HepG2 (cell line): ENCODE measurements at regions of chr5 and their contacts with region 1.

Region 1: DNA sequence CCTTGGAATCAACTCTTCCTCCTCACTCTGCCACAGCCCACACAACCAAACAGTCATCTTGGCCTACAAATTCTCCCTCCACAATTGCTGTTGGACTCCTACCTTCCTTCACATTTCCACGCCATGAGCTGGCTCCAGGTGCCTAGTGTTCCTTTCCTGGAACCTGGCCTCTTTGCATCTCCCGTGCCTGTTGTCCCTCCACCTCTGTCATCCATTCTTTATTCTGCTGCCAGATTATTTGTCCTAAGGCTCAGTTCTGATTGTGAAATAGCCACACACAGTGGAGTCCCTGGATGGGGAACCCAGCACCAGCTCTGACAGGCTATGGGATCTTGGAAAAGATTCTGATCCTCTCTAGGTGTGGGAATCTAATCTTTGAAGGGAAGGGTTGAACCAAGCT is 109.1 kb upstream of the ANKH start:
- DNase-seq: peak; percentile 32
- ATAC-seq: peak; percentile 75
- H3K4me3 ChIP-seq: no peak overlapping the region
- H3K27ac ChIP-seq: no peak overlapping the region
- H3K4me1 ChIP-seq: peaks cover 46% of the 10 kb centered on the region
- H3K27me3 ChIP-seq: no peaks in the 10 kb centered on the region
- CTCF ChIP-seq: no peak
- EP300 ChIP-seq: no peak
- POLR2A ChIP-seq: no peak
- RAD21 ChIP-seq: no peak

Region 2: GRCh38 chr5:14998491-14998890 is 17.8 kb after region 1 on chr5:
- CTCF ChIA-PET with region 1: no interaction called
- POLR2A ChIA-PET with region 1: no interaction called
- in situ Hi-C with region 1: no loop called
- intact Hi-C with region 1: loop called (anchors 2 kb)
- DNase-seq: no peak
- ATAC-seq: no peak
- H3K4me3 ChIP-seq: no peak overlapping the region
- H3K27ac ChIP-seq: no peak overlapping the region
- H3K4me1 ChIP-seq: peaks cover 14% of the 10 kb centered on the region
- H3K27me3 ChIP-seq: peaks cover 0 to 9% of the 10 kb centered on the region in 2 experiments; a peak in 1 of 5 replicates
- CTCF ChIP-seq: no peak
- EP300 ChIP-seq: no peak
- POLR2A ChIP-seq: no peak
- RAD21 ChIP-seq: no peak